Mucosa of descending colon (tissue), 3 donors: ENCODE measurements at regions of chr5 and their contacts with region 1.

Region 1: DNA sequence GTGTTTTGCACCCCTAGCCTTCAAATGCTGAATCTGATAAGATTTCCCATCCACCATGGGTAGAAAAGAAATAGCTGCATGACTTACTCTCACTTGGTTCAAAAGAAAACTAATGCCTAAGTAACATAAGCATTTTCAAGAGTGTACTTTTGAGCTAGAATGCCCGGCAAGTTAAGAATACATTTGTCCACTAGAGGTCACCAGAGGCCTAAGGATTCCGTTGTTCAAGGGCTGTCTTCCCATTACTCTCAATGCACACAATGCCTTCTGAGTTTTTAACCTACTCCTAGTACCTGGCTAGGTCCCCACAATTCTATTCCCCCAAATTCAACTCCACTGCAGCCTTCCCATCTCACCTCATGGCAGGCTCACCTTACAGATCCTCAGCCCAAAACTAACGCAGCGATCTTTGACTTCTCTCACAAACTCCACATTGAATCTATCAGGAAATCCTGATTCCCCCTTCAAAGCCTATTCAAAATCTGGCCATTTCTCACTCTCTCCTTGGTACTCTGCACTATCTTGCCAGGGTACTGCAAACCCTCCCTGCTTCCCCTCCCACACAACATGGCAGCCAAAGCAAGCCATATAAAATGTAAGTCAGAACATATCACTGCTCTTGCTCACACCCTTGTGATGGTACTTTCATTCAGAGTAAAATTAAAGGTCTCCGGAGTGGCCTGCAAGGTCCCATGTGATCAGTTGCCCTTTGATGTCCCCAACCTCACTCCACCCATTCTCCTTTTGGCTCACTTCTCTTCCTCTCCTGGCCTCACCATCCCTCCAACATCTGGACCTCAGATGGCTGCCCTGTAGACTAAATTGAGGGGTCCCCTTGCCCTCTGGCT is 13.4 kb downstream of the OXCT1 start:
- DNase-seq: peak in 1 of 3 donors; percentile 79
- ATAC-seq: peak; percentile 92
- H3K4me3 ChIP-seq: no peak overlapping the region
- H3K4me1 ChIP-seq: peaks cover 3% of the 10 kb centered on the region
- CTCF ChIP-seq: peak; percentile 62

Region 2: DNA sequence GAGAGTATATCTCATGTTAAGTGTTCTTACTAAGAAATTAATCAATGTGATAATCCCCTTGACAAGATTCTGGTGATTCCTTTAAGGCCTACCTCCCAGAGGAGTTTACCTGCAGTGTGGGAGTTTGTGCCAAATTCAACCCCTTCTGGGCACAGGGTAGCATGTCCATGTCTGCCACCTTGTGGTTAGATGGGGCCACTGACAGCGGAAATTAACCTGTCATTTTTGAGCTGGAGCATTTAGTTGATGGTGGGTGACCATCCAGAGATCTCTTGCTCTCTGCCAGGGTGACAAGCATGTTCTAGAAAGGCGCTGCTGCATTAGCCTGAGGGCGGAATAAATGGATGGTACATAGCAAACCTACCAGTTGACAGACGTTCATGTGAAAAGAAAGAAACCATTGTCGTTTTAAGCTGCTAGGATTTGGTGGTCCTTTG is 200.4 kb after region 1 on chr5:
- intact Hi-C with region 1: loop called in 1 of 2 experiments (anchors 10 kb)
- DNase-seq: peak in 2 of 3 donors; percentile 28 to 63
- ATAC-seq: peak; percentile 69
- H3K4me3 ChIP-seq: no peak overlapping the region
- H3K4me1 ChIP-seq: no peaks in the 10 kb centered on the region
- CTCF ChIP-seq: peak; percentile 40

Region 3: GRCh38 chr5:42168091-42168670 is 311.3 kb after region 1 on chr5:
- intact Hi-C with region 1: no loop called
- DNase-seq: no peak
- ATAC-seq: no peak
- H3K4me3 ChIP-seq: no peak overlapping the region
- H3K4me1 ChIP-seq: no peaks in the 10 kb centered on the region
- CTCF ChIP-seq: no peak

Region 4: GRCh38 chr5:42301349-42301748 is 444.5 kb after region 1 on chr5:
- intact Hi-C with region 1: no loop called
- DNase-seq: no peak
- ATAC-seq: no peak
- H3K4me3 ChIP-seq: no peak overlapping the region
- H3K4me1 ChIP-seq: no peaks in the 10 kb centered on the region
- CTCF ChIP-seq: no peak